ENCODE measurements at regions of chr2 and their contacts with region 1.

Region 1: DNA sequence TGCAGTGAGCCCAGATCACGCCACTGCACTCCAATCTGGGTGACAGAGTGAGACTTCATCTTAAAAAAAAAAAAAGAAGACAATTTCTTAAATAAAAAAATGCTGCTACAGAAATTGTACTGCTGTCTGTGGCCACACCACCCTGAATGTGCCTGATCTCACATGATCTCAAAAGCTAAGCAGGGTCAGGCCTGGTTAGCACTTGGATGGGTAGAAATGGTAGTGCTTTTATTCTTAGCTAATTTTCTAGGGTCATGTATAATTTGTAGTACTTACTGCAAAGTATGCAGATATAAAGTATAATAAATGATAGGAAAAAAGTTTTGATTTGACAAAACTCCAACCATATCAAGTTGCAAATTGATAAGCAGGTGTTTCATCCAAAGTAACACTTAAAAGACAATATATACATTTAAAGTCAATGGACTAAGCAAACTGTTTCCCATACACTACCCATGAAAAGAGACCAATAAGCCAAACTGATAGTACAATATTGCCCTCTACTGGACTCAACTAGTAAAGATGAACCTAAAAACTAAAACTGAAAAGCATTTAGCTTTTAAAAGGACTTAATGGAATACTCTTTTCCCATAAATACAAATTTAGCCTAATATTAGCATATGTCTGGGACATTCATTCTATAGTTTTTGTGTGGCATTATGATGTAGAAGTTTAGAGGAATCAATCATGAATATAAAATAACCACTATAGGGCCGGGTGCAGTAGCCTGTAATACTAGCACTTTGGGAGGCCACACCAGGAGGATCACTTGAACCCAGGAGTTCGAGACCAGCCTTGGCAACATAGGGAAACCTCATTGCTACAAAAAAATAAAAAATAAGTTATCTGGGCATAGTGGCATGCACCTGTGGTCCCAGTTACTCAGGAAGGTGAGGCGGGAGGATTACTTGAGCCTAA is 18.6 kb upstream of the PEX13 start:
- DNase-seq: peak in 7 of 9 donors; percentile 13 to 63 (median 52)
- ATAC-seq: peak; percentile 91
- H3K4me3 ChIP-seq: no peak overlapping the region
- H3K4me3 Mint-ChIP-seq: no peak overlapping the region
- H3K27ac ChIP-seq: no peak overlapping the region
- H3K27ac Mint-ChIP-seq: no peak overlapping the region
- H3K4me1 ChIP-seq: no peaks in the 10 kb centered on the region
- H3K4me1 Mint-ChIP-seq: no peaks in the 10 kb centered on the region
- H3K27me3 ChIP-seq: no peaks in the 10 kb centered on the region
- H3K27me3 Mint-ChIP-seq: no peaks in the 10 kb centered on the region

Region 2: GRCh38 chr2:60707750-60708371 is 291.0 kb before region 1 on chr2:
- CTCF ChIA-PET with region 1: interaction called, 108 read pairs
- POLR2A ChIA-PET with region 1: interaction called, 3 read pairs
- intact Hi-C with region 1: loop called (anchors 1 kb)
- DNase-seq: peak in 6 of 9 donors; percentile 8 to 47 (median 34)
- ATAC-seq: peak; percentile 65
- H3K4me3 ChIP-seq: no peak overlapping the region
- H3K4me3 Mint-ChIP-seq: no peak overlapping the region
- H3K27ac ChIP-seq: no peak overlapping the region
- H3K27ac Mint-ChIP-seq: peak overlapping the region in 2 of 9 donors; percentile 4 to 39
- H3K4me1 ChIP-seq: no peaks in the 10 kb centered on the region
- H3K4me1 Mint-ChIP-seq: no peaks in the 10 kb centered on the region
- H3K27me3 ChIP-seq: no peaks in the 10 kb centered on the region
- H3K27me3 Mint-ChIP-seq: peaks cover 0 to 7% (median 0%) of the 10 kb centered on the region in 5 donors

Region 3: DNA sequence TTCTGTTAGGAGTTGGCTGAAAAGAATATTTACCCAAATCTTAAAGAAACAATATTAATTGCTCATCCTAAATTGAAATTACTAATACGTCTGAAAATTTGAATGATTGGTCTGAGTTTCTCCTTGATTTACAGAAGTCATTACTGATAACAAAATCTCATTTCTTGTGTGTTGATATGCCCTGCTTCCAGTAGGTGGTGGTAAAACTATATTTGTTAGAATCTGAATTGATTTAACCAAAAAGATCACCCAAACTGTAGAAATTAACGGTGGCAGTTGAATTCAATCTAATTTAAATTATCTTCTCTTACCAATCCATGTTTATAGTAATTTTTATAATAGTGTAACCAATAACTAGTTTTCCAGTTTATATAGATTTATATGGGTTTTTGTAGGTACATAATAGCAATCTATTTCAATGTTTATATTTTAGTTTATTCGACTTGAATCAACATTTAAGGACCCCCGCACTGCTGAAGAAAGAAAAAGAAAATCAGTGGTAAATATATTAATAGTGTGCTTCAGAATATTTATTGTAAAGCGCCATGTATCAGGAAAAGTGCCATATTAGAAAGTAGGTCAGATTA is 204.5 kb before region 1 on chr2:
- CTCF ChIA-PET with region 1: interaction called, 5 read pairs
- POLR2A ChIA-PET with region 1: interaction called, 3 read pairs
- intact Hi-C with region 1: loop called (anchors 1 kb)
- DNase-seq: peak in 4 of 9 donors; percentile 20 to 44 (median 27)
- ATAC-seq: peak; percentile 64
- H3K4me3 ChIP-seq: no peak overlapping the region
- H3K4me3 Mint-ChIP-seq: no peak overlapping the region
- H3K27ac ChIP-seq: no peak overlapping the region
- H3K27ac Mint-ChIP-seq: peak overlapping the region in 2 of 9 donors; percentile 2 to 42
- H3K4me1 ChIP-seq: peaks cover 0 to 7% of the 10 kb centered on the region in 2 donors
- H3K4me1 Mint-ChIP-seq: peaks cover 0 to 16% (median 2%) of the 10 kb centered on the region in 7 donors
- H3K27me3 ChIP-seq: no peaks in the 10 kb centered on the region
- H3K27me3 Mint-ChIP-seq: no peaks in the 10 kb centered on the region

Region 4: DNA sequence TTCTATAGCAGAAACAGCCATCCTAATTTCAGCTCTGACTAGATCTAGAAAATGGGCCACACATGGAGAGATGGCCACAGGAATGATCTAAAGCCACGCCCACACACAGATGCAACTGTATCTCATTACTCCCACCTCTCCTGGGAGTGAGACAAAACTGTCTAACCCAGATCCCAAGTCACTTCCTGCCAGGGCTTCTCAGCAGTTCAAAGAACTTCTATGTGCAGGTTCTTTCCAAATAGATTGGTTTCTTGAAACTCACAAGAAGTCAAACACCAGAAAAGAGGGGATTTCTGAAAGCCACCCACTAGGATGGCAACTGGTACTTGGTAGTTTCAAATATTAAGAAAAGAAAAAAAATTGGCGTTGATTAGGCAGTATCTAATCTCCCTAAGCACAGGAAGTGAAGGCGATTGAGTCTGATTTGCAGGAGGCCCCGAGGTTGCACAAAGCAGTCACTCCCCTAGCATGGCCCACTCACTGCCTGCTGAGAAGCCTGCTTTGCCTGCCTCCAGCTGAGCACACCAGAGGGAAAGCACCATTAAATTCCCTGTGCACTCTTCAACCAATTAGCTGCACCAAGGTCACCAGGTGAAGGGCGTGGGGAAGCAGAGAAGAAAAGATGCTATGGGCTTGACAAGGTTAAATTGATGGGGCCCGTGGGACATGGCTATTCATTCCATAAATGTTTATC is 191.8 kb before region 1 on chr2:
- CTCF ChIA-PET with region 1: interaction called, 28 read pairs
- POLR2A ChIA-PET with region 1: no interaction called
- intact Hi-C with region 1: loop called (anchors 1 kb)
- DNase-seq: peak in 5 of 9 donors; percentile 15 to 53 (median 20)
- ATAC-seq: peak; percentile 65
- H3K4me3 ChIP-seq: no peak overlapping the region
- H3K4me3 Mint-ChIP-seq: peak overlapping the region; percentile 15 to 73 (median 52)
- H3K27ac ChIP-seq: peak overlapping the region; percentile 57
- H3K27ac Mint-ChIP-seq: peak overlapping the region; percentile 7 to 88 (median 73)
- H3K4me1 ChIP-seq: peaks cover 19 to 23% of the 10 kb centered on the region in 2 donors
- H3K4me1 Mint-ChIP-seq: peaks cover 28 to 51% (median 44%) of the 10 kb centered on the region in 7 donors
- H3K27me3 ChIP-seq: no peaks in the 10 kb centered on the region
- H3K27me3 Mint-ChIP-seq: no peaks in the 10 kb centered on the region

Region 5: GRCh38 chr2:60926737-60927552 is 71.9 kb before region 1 on chr2:
- CTCF ChIA-PET with region 1: interaction called, 5 read pairs
- POLR2A ChIA-PET with region 1: no interaction called
- intact Hi-C with region 1: loop called in 1 of 2 experiments (anchors 5 kb)
- DNase-seq: no peak
- ATAC-seq: peak; percentile 85
- H3K4me3 ChIP-seq: no peak overlapping the region
- H3K4me3 Mint-ChIP-seq: no peak overlapping the region
- H3K27ac ChIP-seq: no peak overlapping the region
- H3K27ac Mint-ChIP-seq: peak overlapping the region in 1 of 9 donors; percentile 24
- H3K4me1 ChIP-seq: no peaks in the 10 kb centered on the region
- H3K4me1 Mint-ChIP-seq: peaks cover 0 to 12% (median 4%) of the 10 kb centered on the region in 7 donors
- H3K27me3 ChIP-seq: peaks cover 0 to 3% of the 10 kb centered on the region in 2 donors
- H3K27me3 Mint-ChIP-seq: no peaks in the 10 kb centered on the region

Region 6: GRCh38 chr2:60966507-60967405 is 32.1 kb before region 1 on chr2:
- CTCF ChIA-PET with region 1: interaction called, 6 read pairs
- POLR2A ChIA-PET with region 1: no interaction called
- intact Hi-C with region 1: loop called in 1 of 2 experiments (anchors 2 kb)
- DNase-seq: peak in 3 of 9 donors; percentile 7 to 23 (median 9)
- ATAC-seq: peak; percentile 29
- H3K4me3 ChIP-seq: no peak overlapping the region
- H3K4me3 Mint-ChIP-seq: peak overlapping the region; percentile 31 to 78 (median 64)
- H3K27ac ChIP-seq: no peak overlapping the region
- H3K27ac Mint-ChIP-seq: peak overlapping the region; percentile 22 to 80 (median 59)
- H3K4me1 ChIP-seq: peaks cover 22 to 28% of the 10 kb centered on the region in 2 donors
- H3K4me1 Mint-ChIP-seq: peaks cover 12 to 54% (median 43%) of the 10 kb centered on the region in 7 donors
- H3K27me3 ChIP-seq: no peaks in the 10 kb centered on the region
- H3K27me3 Mint-ChIP-seq: no peaks in the 10 kb centered on the region

Region 7: DNA sequence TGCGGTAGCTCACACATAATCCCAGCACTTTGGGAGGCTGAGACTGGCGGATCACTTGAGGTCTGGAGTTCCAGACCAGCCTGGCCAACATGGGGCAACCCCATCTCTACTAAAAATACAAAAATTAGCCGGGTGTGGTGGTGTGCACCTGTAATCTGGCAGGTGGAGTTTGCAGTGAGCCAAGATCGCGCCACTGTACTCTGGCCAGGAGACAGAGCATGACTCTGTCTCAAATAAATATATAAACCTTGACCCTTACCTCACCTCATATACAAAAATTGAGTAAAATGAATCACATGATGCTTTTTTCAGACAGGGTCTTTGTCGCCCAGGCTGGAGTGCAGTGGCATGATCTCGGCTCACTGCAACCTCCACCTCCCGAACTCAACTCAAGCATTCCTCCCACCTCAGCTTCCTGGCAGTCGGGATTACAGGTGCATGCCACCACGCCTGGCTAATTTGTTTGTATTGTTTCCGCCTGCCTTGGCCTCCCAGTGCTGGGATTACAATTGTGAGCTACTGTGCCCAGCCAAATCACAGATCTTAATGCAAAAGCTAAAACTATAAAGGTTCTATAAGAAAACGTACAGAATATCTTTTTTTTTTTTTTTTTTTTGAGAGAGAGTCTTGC is 514.0 kb after region 1 on chr2:
- CTCF ChIA-PET with region 1: no interaction called
- POLR2A ChIA-PET with region 1: no interaction called
- intact Hi-C with region 1: no loop called
- DNase-seq: no peak
- ATAC-seq: no peak
- H3K4me3 ChIP-seq: no peak overlapping the region
- H3K4me3 Mint-ChIP-seq: no peak overlapping the region
- H3K27ac ChIP-seq: peak overlapping the region; percentile 14
- H3K27ac Mint-ChIP-seq: peak overlapping the region in 7 of 9 donors; percentile 55 to 74 (median 60)
- H3K4me1 ChIP-seq: no peaks in the 10 kb centered on the region
- H3K4me1 Mint-ChIP-seq: peaks cover 8 to 40% (median 29%) of the 10 kb centered on the region in 7 donors
- H3K27me3 ChIP-seq: no peaks in the 10 kb centered on the region
- H3K27me3 Mint-ChIP-seq: no peaks in the 10 kb centered on the region